GM12878 (cell line): ENCODE measurements at regions of chr10 and their contacts with region 1.

Region 1: DNA sequence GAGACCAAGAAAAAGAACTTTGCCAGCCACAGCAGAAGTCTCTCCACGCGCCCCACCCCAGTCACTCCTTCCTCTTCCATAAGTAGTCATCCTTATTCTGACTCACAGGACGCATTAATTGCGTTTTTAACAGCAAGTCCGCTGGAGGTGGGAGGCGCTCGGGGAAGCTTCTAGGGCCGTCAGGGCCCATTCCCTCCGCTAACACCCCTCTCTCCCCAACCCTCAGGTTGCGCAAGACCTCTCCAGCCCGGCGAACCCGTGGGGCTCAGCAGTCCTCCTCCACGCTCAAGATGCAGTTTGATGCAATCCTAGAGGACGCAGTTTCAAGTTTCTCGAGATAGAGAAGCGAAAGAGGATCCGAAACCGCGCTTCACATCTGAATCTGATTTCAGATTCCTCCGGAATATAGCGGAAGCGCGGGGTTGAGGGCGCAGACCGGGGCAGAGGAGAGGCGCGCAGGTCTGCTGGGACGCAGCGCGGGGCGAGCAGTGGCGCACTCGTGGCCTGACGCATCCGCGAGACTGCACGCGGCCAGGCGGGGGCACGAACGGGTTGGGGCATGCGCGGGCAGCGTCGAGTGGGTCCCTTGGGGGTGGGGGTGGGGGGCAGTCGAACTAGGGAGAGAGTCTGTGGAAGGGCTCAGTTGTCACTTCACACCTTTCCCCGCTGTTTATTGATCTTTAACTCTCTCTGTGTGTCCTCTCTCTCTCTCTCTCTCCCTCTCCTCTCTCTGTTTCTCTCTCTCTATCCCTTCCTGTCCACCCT is 37.8 kb upstream of the PSAP start:
- DNase-seq: peak; percentile 78
- ATAC-seq: peak; percentile 98
- H3K4me3 ChIP-seq: peak overlapping the region; percentile 64
- H3K27ac ChIP-seq: peak overlapping the region; percentile 62
- H3K4me1 ChIP-seq: peaks cover 26% of the 10 kb centered on the region
- H3K27me3 ChIP-seq: no peaks in the 10 kb centered on the region
- CTCF ChIP-seq: 0 out of 6 replicates have a peak, but pooled peaks of 1 of the 3 experiments have one; percentile 2
- EP300 ChIP-seq: peak; percentile 10 to 67; a peak in 2 of 4 replicates
- POLR2A ChIP-seq: peak; percentile 82
- RAD21 ChIP-seq: no peak

Region 2: DNA sequence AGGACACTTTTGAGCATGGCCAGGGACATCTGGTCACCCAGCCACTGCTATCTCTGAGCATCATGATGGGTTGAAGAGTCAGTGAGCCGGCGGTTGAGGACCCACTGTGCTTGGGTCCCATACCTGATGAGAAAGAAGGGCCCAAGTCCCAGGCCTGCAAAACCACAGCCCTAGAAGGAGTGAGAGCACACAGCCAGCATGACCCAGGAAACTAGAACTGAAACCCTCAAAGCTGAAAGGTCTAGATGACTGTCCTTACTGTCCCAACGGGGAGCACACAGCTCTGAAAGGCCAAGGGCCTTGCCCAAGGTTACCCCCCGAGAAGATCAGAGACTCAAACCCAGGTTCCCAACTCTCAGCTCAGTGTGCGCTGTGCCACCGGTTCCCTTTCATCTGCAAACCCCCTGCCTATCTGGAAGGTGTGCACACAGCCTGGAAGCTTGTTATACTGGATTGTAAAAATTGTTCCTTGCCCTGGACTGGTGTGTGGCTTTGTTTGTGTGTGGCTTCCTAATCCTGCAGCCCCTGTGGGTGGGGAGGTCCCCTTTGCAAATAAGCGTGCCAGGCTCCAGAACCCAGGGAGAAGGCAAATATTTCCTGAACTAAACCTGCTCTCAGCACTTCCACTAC is 15.1 kb before region 1 on chr10:
- CTCF ChIA-PET with region 1: interaction called, 3 read pairs
- POLR2A ChIA-PET with region 1: no interaction called
- RAD21 ChIA-PET with region 1: interaction called, 3 read pairs
- SMC1A ChIA-PET with region 1: interaction called, 3 read pairs
- in situ Hi-C with region 1: no loop called
- intact Hi-C with region 1: loop called (anchors 1 kb)
- DNase-seq: peak; percentile 89
- ATAC-seq: peak; percentile 98
- H3K4me3 ChIP-seq: no peak overlapping the region
- H3K27ac ChIP-seq: peak overlapping the region; percentile 70
- H3K4me1 ChIP-seq: peaks cover 30% of the 10 kb centered on the region
- H3K27me3 ChIP-seq: no peaks in the 10 kb centered on the region
- CTCF ChIP-seq: no peak
- EP300 ChIP-seq: 0 out of 4 replicates have a peak, but pooled peaks of 1 of the 2 experiments have one; percentile 34
- POLR2A ChIP-seq: no peak
- RAD21 ChIP-seq: no peak